Activated CD4-positive, alpha-beta T cell treated with anti-CD3 and anti-CD28 coated beads for 36 hours (primary cell): ENCODE measurements at regions of chr3 and their contacts with region 1.

Region 1: DNA sequence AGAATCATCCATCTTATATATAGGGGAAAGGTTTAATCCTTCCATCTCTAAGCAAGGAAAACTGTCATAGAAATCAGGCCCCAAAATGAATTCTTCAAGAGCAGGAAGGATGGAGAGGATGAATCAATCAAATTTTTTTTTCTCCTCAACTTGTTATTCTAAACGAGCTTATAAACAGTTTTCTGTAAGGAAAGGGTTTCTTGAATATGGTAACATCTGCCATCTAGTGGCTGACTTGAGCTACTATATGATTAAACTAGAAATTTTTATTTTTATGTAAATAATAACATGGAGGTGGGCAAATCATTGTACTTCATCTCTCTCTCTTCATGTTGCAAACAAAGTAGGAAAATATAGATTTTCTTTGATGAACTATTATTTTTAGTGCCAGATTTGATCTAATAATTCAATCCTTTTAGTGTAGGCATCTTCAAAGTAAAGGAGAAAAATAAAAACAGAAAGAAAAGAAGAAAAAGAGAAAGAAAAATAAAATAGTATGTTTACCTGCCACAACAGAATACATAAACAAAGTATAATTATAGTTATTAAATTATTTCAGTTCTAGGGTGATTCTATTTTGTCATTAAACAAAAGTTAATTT is 146.6 kb downstream of the SERPINI1 start:
- DNase-seq: no peak
- ATAC-seq: peak; percentile 55
- H3K4me3 Mint-ChIP-seq: no peak overlapping the region
- H3K27ac Mint-ChIP-seq: no peak overlapping the region
- H3K4me1 Mint-ChIP-seq: peaks cover 3% of the 10 kb centered on the region
- H3K27me3 Mint-ChIP-seq: peaks cover 11% of the 10 kb centered on the region

Region 2: GRCh38 chr3:167380004-167380689 is 502.0 kb before region 1 on chr3 and contains the start of gene ZBBX:
- CTCF ChIA-PET with region 1: interaction called, 40 read pairs
- POLR2A ChIA-PET with region 1: no interaction called
- intact Hi-C with region 1: loop called (anchors 1 kb)
- DNase-seq: peak; percentile 91
- ATAC-seq: peak; percentile 95
- H3K4me3 Mint-ChIP-seq: peak within 1 kb of the TSS; percentile 71
- H3K27ac Mint-ChIP-seq: peak within 1 kb of the TSS; percentile 59
- H3K4me1 Mint-ChIP-seq: peaks cover 11% of the 10 kb centered on the region
- H3K27me3 Mint-ChIP-seq: peaks cover 9% of the 10 kb centered on the region
- total RNA-seq, gene ZBBX: not detected

Region 3: DNA sequence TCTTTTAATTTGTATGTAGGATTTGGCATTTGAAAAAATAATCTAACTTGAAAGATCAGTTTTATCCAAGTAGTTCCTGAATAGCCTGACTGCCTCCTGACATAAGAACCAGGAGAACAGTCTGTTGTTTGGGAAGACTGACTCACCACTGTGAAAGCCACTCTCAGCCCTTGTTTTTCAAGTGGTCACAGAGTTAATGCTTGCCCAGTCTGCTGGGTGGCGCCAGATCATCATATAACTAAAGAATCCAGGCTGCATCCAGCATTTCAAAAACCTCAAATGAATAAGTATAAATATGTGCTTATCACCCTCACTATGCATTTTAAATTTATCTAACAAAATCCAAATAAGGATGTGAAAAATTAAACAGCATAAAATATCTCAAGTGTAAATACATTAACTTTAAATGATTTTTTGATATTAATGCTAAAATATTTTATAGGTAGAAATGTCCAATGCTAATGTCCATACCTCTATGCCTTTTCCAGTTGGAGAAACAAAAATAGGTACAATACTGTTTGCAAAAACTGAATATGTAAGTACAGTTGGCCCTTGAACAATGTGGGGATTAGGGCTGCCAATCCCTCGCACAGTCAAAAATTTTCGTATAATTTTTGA is 475.2 kb before region 1 on chr3:
- CTCF ChIA-PET with region 1: interaction called, 8 read pairs
- POLR2A ChIA-PET with region 1: no interaction called
- intact Hi-C with region 1: loop called in 1 of 2 experiments (anchors 1 kb)
- DNase-seq: peak; percentile 28
- ATAC-seq: peak; percentile 57
- H3K4me3 Mint-ChIP-seq: no peak overlapping the region
- H3K27ac Mint-ChIP-seq: no peak overlapping the region
- H3K4me1 Mint-ChIP-seq: no peaks in the 10 kb centered on the region
- H3K27me3 Mint-ChIP-seq: no peaks in the 10 kb centered on the region

Region 4: DNA sequence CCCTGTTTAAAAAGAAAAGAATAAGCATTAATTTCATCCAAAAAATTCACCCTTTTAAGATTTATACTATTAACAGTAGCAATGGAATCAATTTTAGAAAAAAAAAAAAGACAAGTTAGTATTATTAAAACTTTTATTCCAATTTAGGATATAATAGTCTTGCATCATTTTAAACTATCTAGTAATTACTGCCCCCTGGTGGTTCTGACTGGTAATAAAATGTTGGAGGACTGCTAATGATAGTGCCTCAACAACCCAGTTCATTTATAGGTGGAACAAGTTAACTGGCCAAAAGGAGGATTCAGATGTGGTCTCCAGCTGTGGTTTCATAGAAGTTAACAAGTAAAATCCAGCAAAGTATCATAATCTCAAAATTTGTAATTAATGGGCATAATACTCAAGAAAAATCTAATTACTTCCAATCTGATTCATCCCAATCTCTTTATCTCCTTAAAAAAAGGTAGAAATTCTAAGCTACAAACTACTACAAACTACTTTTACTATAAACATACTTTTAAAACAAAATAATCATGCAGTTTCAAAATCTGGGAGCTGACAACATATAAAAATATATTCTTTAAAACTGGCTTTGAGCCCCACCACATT is 197.7 kb before region 1 on chr3:
- CTCF ChIA-PET with region 1: interaction called, 11 read pairs
- POLR2A ChIA-PET with region 1: no interaction called
- intact Hi-C with region 1: loop called (anchors 2 to 5 kb)
- DNase-seq: peak; percentile 47
- ATAC-seq: peak; percentile 57
- H3K4me3 Mint-ChIP-seq: no peak overlapping the region
- H3K27ac Mint-ChIP-seq: no peak overlapping the region
- H3K4me1 Mint-ChIP-seq: peaks cover 9% of the 10 kb centered on the region
- H3K27me3 Mint-ChIP-seq: no peaks in the 10 kb centered on the region

Region 5: GRCh38 chr3:167691366-167691765 is 190.8 kb before region 1 on chr3:
- CTCF ChIA-PET with region 1: interaction called, 11 read pairs
- POLR2A ChIA-PET with region 1: no interaction called
- intact Hi-C with region 1: loop called in 1 of 2 experiments (anchors 5 kb)
- DNase-seq: peak; percentile 47
- ATAC-seq: peak; percentile 99
- H3K4me3 Mint-ChIP-seq: no peak overlapping the region
- H3K27ac Mint-ChIP-seq: no peak overlapping the region
- H3K4me1 Mint-ChIP-seq: peaks cover 38% of the 10 kb centered on the region
- H3K27me3 Mint-ChIP-seq: no peaks in the 10 kb centered on the region

Region 6: DNA sequence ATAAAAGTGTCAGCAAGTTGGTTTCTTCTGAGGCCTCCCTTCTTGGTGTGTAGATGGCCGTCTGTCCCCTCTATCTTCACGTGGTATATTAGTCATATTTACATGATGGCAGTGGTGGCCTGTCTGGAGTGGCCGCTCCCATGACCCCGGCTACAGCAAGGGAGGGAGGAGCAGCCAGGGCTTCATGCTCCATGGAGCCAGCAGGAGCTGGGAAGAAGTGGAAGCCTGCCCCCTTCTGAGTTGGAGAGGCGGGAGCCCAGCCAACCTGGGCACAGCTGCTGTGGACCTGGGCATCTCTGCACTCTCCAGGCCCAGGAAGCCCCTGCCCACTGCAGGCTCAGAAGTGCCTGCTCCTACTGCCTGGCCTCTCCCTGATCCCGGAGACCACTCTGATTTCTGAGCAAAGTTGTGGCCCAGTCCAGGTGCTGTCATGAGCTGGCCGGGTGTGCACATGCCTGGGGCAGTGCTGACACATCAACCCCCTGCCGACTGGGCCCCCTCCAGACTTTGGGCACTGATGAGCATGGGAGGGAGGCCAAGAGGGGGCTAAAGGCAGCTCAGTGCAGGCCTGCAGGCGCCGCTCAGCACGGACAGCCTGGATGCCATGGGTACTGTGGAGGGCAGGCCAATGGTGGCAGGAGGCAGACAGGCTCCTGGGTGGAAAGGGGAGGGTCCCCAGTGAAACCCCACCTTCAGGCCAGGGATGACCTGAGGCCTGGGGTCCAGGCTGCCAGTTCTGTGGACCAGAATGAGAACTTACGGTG is 61.9 kb before region 1 on chr3:
- CTCF ChIA-PET with region 1: no interaction called
- POLR2A ChIA-PET with region 1: no interaction called
- intact Hi-C with region 1: no loop called
- DNase-seq: no peak
- ATAC-seq: no peak
- H3K4me3 Mint-ChIP-seq: no peak overlapping the region
- H3K27ac Mint-ChIP-seq: no peak overlapping the region
- H3K4me1 Mint-ChIP-seq: no peaks in the 10 kb centered on the region
- H3K27me3 Mint-ChIP-seq: no peaks in the 10 kb centered on the region

Region 7: DNA sequence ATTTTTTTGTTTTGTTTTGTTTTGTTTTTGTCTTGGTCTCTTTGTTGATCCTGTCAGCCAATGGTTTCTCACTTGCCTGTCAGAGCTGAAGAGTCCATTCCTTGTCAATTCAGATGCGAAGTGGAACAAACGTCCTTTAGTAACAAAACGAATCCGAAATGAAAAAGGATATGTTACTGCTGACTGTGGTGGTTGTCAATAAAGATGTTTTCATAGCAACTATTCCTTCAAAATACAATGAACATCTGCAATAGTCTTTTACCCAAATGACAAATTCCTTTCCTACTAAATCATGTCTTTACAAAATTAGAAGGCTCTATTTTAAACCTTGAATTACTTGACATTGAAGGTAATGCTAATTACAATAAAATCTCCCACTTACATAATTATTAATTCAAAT is 12.0 kb before region 1 on chr3:
- CTCF ChIA-PET with region 1: interaction called, 11 read pairs
- POLR2A ChIA-PET with region 1: interaction called, 3 read pairs
- intact Hi-C with region 1: no loop called
- DNase-seq: no peak
- ATAC-seq: no peak
- H3K4me3 Mint-ChIP-seq: no peak overlapping the region
- H3K27ac Mint-ChIP-seq: no peak overlapping the region
- H3K4me1 Mint-ChIP-seq: no peaks in the 10 kb centered on the region
- H3K27me3 Mint-ChIP-seq: peaks cover 3% of the 10 kb centered on the region

Region 8: GRCh38 chr3:167958141-167958540 is 76.0 kb after region 1 on chr3:
- CTCF ChIA-PET with region 1: no interaction called
- POLR2A ChIA-PET with region 1: no interaction called
- intact Hi-C with region 1: no loop called
- DNase-seq: no peak
- ATAC-seq: no peak
- H3K4me3 Mint-ChIP-seq: no peak overlapping the region
- H3K27ac Mint-ChIP-seq: no peak overlapping the region
- H3K4me1 Mint-ChIP-seq: no peaks in the 10 kb centered on the region
- H3K27me3 Mint-ChIP-seq: peaks cover 4% of the 10 kb centered on the region